OCI-LY7 (cell line): ENCODE measurements at regions of chr9 and their contacts with region 1.

Region 1: DNA sequence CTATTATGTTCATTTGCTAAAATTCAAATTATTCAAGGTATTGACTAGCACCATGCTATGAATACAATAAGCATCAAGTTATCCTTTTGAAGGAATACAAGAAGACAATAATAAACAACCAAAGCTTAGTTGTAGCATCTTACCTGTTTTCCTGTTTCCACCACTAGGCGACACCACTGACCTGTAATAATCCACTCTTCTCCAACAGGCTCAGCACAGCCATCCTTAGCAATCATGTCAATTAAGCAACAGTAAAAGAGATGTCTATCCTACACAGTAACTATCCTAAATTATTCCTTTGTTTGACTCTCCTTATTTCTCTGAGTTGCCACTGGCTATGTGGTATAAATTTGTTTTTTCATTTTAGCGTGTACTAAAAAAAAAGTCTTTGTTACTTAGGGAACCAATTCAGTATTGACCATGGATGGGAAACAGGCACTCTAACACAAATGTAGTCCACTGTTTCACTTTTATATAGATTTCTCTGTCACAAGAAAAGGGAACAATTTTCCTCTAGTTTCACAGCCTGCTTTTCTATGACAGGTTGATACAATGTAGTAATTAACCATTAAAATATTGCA is 46.2 kb downstream of the PCA3 start:
- DNase-seq: peak; percentile 36
- H3K4me3 ChIP-seq: no peak overlapping the region
- H3K27ac ChIP-seq: no peak overlapping the region
- H3K4me1 ChIP-seq: no peaks in the 10 kb centered on the region
- CTCF ChIP-seq: peak; percentile 90

Region 2: GRCh38 chr9:76787677-76788076 is 22.8 kb before region 1 on chr9:
- CTCF ChIA-PET with region 1: no interaction called
- POLR2A ChIA-PET with region 1: no interaction called
- intact Hi-C with region 1: no loop called
- DNase-seq: no peak
- H3K4me3 ChIP-seq: no peak overlapping the region
- H3K27ac ChIP-seq: no peak overlapping the region
- H3K4me1 ChIP-seq: no peaks in the 10 kb centered on the region
- CTCF ChIP-seq: no peak

Region 3: GRCh38 chr9:76969716-76970115 is 159.2 kb after region 1 on chr9:
- CTCF ChIA-PET with region 1: no interaction called
- POLR2A ChIA-PET with region 1: no interaction called
- intact Hi-C with region 1: no loop called
- DNase-seq: no peak
- H3K4me3 ChIP-seq: no peak overlapping the region
- H3K27ac ChIP-seq: no peak overlapping the region
- H3K4me1 ChIP-seq: no peaks in the 10 kb centered on the region
- CTCF ChIP-seq: no peak

Region 4: GRCh38 chr9:76996700-76997099 is 186.2 kb after region 1 on chr9:
- CTCF ChIA-PET with region 1: no interaction called
- POLR2A ChIA-PET with region 1: no interaction called
- intact Hi-C with region 1: loop called (anchors 5 kb)
- DNase-seq: peak; percentile 5
- H3K4me3 ChIP-seq: no peak overlapping the region
- H3K27ac ChIP-seq: no peak overlapping the region
- H3K4me1 ChIP-seq: no peaks in the 10 kb centered on the region
- CTCF ChIP-seq: peak; percentile 50

Region 5: GRCh38 chr9:77149879-77150278 is 339.4 kb after region 1 on chr9:
- CTCF ChIA-PET with region 1: no interaction called
- POLR2A ChIA-PET with region 1: no interaction called
- intact Hi-C with region 1: loop called (anchors 1 kb)
- DNase-seq: no peak
- H3K4me3 ChIP-seq: no peak overlapping the region
- H3K27ac ChIP-seq: no peak overlapping the region
- H3K4me1 ChIP-seq: no peaks in the 10 kb centered on the region
- CTCF ChIP-seq: no peak